Ovary (tissue), 10 donors: ENCODE measurements at regions of chr11 and their contacts with region 1.

Region 1: DNA sequence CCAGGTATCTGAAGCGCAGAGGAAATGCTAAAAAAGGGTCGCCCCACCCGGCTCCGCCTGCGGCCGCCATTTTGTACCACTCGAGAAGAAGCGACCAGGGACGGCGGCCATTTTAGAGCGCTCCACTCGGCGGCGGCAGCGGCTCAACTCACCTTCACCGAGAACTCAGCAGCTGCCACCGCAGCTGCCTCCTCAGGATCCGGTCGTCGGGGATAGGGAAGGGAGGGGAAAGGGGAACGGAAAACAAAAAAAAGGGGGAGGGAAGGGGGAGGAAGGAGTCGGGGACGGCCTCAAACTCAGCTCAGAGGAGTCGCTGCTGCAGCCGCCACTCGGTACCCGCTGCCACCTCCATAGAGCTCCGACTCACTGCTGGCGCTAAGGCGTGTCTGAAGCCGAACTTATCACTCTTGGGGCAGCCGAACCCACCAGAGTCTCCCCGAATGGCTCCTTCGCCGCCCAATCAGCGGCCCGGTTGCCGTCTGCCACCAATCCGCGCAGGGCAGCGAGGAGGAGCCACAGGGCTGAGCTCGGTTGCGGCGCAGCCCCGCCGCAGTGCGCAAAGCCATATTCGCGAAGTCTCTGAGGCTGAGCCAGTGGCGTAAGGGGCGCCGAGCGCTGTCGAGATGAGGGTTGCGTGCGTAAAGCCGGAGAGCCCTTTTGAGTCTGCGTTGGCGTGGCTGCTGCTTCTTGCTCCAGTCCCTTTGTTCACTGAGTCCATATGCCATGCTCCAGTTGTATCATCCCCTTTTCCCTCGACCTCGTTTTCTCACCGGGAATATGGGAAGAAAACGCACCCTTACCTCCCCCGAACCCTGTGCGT is at the start of gene EIF4G2:
- DNase-seq: peak; percentile 98
- H3K4me3 ChIP-seq: peak within 1 kb of the TSS; percentile 99
- H3K27ac ChIP-seq: peak within 1 kb of the TSS; percentile 94 to 96
- H3K4me1 ChIP-seq: peaks cover 5% of the 10 kb centered on the region
- H3K27me3 ChIP-seq: no peaks in the 10 kb centered on the region
- CTCF ChIP-seq: peak in 1 of 3 donors; percentile 11
- EP300 ChIP-seq: no peak
- POLR2A ChIP-seq: peak; percentile 98
- total RNA-seq, gene EIF4G2: 206 to 761 (median 582) TPM

Region 2: GRCh38 chr11:10540923-10541560 is 267.7 kb before region 1 on chr11 and contains the start of gene RNF141:
- intact Hi-C with region 1: no loop called
- DNase-seq: peak; percentile 91 to 98 (median 96)
- H3K4me3 ChIP-seq: peak within 1 kb of the TSS; percentile 70
- H3K27ac ChIP-seq: peak within 1 kb of the TSS; percentile 33 to 74
- H3K4me1 ChIP-seq: no peaks in the 10 kb centered on the region
- H3K27me3 ChIP-seq: no peaks in the 10 kb centered on the region
- CTCF ChIP-seq: peak; percentile 88 to 94 (median 92)
- EP300 ChIP-seq: no peak
- POLR2A ChIP-seq: peak; percentile 93
- total RNA-seq, gene RNF141: 11.2 to 30.0 (median 16.6) TPM

Region 3: DNA sequence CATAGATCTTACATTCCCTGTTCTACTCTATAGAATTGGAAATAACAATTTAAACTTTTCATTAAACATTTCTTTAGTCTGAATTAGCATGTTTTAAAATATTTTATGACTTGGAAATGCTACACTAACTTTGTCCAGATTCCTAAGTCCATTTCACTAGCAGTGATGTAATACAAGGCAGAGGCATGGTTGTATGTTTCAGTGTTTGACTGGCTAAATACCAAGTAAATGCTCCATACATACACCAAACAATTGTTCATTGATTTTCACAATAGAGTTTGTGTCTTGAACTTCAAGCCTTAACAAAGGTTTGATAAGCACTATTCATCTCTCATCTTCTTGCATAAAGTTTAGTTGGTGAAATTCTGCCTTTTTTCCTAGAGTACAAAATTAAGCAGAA is 35.6 kb after region 1 on chr11:
- intact Hi-C with region 1: loop called in 1 of 4 experiments (anchors 5 kb)
- DNase-seq: no peak
- H3K4me3 ChIP-seq: no peak overlapping the region
- H3K27ac ChIP-seq: no peak overlapping the region
- H3K4me1 ChIP-seq: no peaks in the 10 kb centered on the region
- H3K27me3 ChIP-seq: no peaks in the 10 kb centered on the region
- CTCF ChIP-seq: no peak
- EP300 ChIP-seq: no peak
- POLR2A ChIP-seq: no peak

Region 4: DNA sequence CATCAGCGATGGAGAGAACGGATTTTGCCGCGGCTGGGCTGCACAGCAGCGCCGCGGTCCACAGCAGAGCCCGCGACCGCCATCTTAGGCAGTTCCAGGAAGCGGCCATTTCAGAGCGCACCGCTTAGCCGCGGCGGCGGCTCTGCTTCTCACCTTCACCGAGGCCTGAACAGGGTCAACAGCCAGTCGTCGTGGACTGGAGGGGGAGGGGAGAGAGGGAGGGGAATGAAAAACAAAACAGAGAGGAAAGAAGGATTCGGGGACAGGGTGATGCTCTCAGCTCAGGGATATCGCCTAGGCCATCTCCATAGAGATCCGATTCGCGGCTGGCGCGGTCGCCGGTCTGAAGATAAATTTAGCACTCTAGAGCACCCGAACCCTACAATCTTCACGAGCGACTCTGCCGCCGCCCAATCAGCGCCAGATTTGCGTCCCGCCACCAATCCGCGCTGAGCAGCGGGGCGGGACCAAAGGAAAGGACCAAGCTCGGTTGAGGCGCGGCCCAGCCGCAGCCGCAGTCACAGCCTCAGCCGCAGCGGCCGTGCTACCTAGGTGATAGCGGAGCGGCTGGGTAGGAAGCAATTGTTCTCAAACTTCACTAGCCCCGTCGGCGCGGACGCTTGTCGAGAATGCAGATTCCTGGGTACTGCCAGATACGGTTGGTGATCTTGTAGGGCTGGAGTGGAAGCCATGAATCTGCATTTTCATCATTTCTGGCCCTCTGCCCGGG is 49.1 kb after region 1 on chr11 and contains the start of gene ZBED5:
- intact Hi-C with region 1: loop called in 3 of 4 experiments (anchors 2 to 10 kb)
- DNase-seq: peak; percentile 96 to 98 (median 97)
- H3K4me3 ChIP-seq: peak within 1 kb of the TSS; percentile 74
- H3K27ac ChIP-seq: peak within 1 kb of the TSS; percentile 89 to 98
- H3K4me1 ChIP-seq: peaks cover 1% of the 10 kb centered on the region
- H3K27me3 ChIP-seq: no peaks in the 10 kb centered on the region
- CTCF ChIP-seq: peak in 2 of 3 donors; percentile 43 to 53
- EP300 ChIP-seq: peak; percentile 27
- POLR2A ChIP-seq: peak; percentile 95
- total RNA-seq, gene ZBED5: 27.8 to 69.4 (median 56.9) TPM

Region 5: DNA sequence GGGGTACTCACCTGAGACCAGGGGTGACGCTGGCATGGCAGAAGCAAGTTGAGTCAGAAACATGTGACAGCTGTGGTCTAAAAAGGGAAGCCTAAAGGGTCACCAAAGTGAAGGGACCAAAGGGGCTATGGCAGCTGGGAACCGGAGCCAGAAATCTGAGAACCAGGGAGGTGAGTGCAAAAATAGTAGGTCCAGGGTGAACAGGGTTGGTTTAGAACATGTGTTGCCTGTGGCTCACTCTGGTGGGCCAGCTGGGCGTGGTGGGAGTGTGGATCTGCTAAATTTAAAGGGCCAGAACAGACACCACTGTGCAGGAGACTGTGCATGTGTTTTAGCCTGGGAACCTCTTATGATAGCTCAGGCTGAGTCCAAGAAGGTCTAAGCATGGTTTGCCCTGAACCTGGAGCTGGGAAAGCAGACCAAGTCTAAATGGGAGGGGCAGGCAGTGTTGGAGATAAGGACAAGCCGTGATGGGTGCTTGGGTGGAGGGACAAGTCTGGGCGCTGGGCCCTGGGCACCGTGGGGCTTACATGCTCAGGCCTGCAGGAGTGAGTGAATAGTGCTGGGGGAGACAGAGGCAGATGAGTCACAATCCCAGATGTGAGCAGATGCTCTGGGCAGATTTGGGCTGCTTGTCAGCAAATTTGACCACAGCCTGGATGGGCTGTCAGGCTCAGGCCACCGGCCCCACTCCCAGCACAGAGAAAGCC is 90.5 kb after region 1 on chr11:
- intact Hi-C with region 1: no loop called
- DNase-seq: peak; percentile 27 to 54 (median 42)
- H3K4me3 ChIP-seq: no peak overlapping the region
- H3K27ac ChIP-seq: peak overlapping the region; percentile 43 to 84
- H3K4me1 ChIP-seq: peaks cover 11% of the 10 kb centered on the region
- H3K27me3 ChIP-seq: no peaks in the 10 kb centered on the region
- CTCF ChIP-seq: no peak
- EP300 ChIP-seq: no peak
- POLR2A ChIP-seq: no peak